ENCODE measurements at regions of chr9 and their contacts with region 1.

Region 1: DNA sequence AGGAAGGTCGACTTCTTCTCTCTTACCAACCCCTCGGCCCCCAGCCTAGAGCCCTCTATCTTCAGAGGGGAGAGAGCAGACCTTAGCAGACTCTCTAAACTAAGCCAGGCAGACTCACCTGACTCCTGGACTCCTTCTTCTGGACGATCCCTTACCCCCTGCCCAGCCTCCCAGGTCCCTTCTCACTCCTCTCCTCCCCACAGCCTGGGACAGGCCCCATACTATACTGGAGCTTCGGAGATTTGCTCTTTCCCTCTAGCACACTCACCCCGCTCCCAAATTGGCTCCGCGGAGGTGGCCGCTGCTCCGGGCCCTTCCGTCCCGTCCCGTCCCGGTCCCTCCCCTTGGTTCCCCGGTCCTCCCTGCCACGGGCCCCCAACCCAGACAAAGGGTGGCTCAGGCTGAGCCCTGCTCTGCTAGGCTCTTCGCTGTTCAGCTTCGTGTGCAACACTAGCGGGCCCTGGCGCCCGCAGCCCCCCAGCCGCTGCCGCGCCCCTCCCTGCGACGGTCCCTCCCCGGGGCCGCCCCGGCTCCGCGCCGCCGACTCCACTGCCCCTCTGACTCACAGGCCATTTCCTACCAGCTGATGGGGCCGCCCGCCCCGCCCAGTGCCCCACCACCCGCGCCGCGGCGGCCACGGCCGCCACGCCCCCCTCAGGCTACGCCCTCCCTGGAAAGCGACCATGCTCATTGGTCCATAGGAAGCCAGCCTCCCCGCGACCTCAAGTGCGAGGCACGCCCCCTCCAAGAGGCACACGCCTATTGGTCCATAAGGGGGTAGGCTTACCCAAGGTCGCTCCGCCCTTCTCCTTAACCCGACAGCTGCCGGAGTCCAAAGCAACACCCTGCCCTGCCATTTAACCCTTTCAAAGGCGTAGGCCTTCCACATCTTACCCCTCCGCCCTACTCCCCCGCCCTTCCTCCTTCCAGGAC is 4.4 kb downstream of the ATOSB start:
- DNase-seq: peak; percentile 96 to 100 (median 99)

Region 2: GRCh38 chr9:35071814-35072460 is 39.3 kb before region 1 on chr9:
- intact Hi-C with region 1: no loop called
- DNase-seq: peak; percentile 48 to 87 (median 74)

Region 3: DNA sequence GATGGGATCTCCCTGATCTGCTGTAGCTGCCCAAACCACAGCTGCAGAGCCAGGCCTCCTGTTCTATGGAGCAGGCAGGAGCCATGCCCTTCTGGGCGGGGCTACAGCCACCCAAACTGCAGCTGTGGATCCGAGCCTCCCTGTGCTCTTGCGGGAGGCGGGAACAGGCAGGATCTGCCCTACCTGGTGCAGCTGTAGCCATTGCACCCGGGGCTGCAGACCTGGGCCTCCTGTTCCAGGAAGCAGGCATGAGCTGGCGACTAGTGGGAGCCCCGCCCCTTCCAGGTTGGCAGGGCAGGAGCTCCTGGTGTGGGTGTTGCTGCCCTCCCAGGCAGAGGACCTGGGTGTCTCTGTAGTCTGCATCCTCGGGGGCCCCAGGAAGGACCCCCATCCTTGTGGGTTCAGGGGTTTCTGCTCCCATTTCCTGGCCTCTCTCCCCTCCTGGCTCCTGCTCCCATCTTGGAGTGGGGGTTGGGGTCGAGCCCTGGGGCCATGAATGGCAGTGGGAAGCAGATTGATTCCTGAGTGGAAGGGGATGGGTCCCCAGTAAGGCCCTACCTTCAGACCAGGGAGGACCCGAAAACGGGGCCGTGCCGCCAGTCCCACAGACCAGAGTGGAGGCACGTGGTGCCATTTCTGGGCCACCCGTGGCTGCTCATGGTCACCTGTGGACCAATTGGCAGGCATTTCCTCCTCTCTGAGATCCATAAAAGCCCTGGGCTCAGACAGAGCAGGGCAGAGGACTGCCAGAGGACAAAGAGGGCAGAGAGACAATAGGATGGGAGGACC is 27.6 kb after region 1 on chr9:
- intact Hi-C with region 1: no loop called
- DNase-seq: peak in 1 of 42 donors; percentile 17

Region 4: DNA sequence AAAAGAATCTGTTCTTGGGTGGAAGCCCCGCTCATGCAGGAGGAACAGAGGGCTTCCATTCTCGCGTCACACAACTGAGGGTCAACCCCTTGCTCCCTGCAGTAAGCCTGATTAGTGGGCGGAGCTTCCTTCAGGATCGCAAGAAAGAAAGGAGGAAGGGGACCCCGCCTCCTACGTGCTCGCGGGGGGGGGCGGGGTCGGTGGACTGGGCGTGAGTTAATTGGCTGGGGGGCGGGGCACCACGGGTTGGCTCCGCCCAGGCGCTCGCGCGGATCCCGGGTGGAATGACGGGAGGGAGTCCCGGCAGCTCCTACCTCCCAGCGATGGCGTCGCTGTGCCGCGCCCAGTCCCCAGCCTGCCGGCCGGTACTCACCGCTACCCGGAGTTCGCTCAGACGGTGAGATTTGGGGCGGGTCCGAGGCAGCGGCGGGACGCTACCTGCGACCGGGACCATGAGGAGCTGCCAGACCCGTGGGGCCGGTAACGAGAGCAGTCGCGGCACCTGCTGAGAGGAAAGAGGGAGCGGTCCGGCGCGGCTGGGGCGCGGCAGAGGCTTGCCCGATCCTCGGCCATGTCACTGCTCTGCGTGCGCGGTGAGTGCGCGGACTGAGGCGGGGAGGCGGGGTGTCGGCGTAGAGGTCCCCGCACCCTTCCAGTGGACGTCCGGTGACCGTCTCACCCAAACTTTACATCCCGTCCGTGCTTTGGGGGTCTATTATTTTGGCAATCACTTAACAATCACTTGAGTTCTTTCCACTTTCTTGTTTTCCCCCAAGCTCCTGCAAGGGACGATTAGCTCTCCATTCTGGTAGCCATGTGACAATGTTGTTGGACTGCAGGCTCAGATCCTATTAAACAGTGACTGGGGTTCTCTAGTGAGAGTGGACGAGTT is 50.7 kb after region 1 on chr9 and contains the start of gene UNC13B:
- intact Hi-C with region 1: loop called (anchors 5 kb)
- DNase-seq: peak; percentile 86 to 98 (median 96)

Region 5: DNA sequence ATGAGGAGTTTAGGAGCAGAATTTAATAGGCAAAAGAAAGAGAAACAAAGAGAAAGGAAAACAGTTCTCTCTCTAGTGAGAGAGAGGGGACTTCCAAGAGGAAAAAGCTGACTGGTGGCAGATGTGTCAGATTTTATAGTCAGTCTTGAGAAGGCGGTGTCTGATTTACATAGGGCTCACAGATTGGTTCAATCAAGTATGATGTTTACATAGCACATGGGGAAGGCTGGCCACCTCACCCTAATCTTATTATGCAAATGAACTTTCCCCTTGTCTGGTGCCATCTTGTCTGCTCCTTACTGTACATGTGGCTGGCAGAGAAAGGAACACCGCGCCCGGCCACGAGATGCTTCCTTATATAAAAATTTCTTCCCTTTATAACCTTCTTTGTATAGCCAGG is 75.3 kb after region 1 on chr9:
- intact Hi-C with region 1: no loop called
- DNase-seq: no peak